Calu3 (cell line): ENCODE measurements at regions of chr2 and their contacts with region 1.

Region 1: GRCh38 chr2:84495539-84496146 is 20.7 kb upstream of the DNAH6 start:
- DNase-seq: peak; percentile 37
- H3K4me3 Mint-ChIP-seq: no peak overlapping the region
- H3K27ac Mint-ChIP-seq: no peak overlapping the region
- H3K4me1 Mint-ChIP-seq: peaks cover 13% of the 10 kb centered on the region
- H3K27me3 Mint-ChIP-seq: no peaks in the 10 kb centered on the region
- CTCF ChIP-seq: peak; percentile 65

Region 2: GRCh38 chr2:84631047-84631446 is 135.4 kb after region 1 on chr2:
- CTCF ChIA-PET with region 1: no interaction called
- intact Hi-C with region 1: loop called (anchors 1 kb)
- DNase-seq: peak; percentile 25
- H3K4me3 Mint-ChIP-seq: no peak overlapping the region
- H3K27ac Mint-ChIP-seq: no peak overlapping the region
- H3K4me1 Mint-ChIP-seq: peaks cover 10% of the 10 kb centered on the region
- H3K27me3 Mint-ChIP-seq: peaks cover 20% of the 10 kb centered on the region
- CTCF ChIP-seq: peak; percentile 36

Region 3: DNA sequence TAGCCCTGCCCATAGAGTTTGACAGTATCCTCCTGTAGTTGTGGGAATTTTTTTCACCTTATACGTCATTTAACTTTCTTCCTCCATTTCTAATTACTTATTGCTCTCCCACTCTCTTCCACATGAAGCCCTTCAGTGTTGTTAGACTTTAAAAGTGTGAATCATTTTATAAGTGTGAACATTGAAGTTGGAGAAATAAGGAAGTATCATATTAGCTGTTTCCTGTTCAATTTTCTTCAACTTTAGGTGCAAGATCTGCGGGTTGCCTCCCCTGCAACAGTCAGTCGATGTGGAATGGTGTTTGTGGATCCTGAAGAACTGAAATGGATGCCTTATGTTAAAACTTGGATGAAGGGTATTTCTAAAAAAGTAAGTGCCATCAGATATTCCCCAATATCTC is 158.8 kb after region 1 on chr2:
- CTCF ChIA-PET with region 1: no interaction called
- intact Hi-C with region 1: no loop called
- DNase-seq: no peak
- H3K4me3 Mint-ChIP-seq: no peak overlapping the region
- H3K27ac Mint-ChIP-seq: no peak overlapping the region
- H3K4me1 Mint-ChIP-seq: no peaks in the 10 kb centered on the region
- H3K27me3 Mint-ChIP-seq: peaks cover 35% of the 10 kb centered on the region
- CTCF ChIP-seq: no peak

Region 4: DNA sequence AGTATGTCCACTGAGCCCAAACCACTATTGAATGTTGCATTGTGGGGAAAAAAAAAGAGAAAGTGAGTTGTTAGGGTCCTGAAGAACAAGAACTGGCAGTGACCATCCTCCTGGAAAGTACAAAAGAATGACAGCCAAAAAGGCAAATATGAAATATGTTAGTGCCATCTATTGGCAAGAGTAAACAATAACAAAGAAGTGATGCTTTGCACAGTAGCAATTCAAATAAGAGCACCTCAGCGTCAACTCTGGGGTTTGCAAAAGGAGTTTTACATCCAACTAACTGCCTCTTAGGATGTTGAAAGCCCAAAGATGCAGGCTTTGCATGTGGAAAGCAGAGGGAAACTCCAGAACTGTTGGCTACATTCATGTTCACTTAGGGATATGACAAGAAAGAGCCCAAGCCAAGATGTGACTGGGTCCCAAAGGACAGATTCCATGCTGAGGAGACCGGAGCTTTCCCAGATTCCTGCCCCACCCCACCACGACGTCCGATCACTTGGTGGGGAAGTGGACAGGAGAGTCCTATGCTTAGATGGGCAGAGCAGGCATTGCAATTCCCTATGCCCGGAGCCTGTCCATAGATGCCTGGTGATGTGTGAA is 369.6 kb after region 1 on chr2:
- CTCF ChIA-PET with region 1: no interaction called
- intact Hi-C with region 1: loop called (anchors 2 kb)
- DNase-seq: no peak
- H3K4me3 Mint-ChIP-seq: no peak overlapping the region
- H3K27ac Mint-ChIP-seq: no peak overlapping the region
- H3K4me1 Mint-ChIP-seq: no peaks in the 10 kb centered on the region
- H3K27me3 Mint-ChIP-seq: peaks cover 20% of the 10 kb centered on the region
- CTCF ChIP-seq: peak; percentile 48

Region 5: GRCh38 chr2:84881581-84882414 is 386.2 kb after region 1 on chr2:
- CTCF ChIA-PET with region 1: no interaction called
- intact Hi-C with region 1: loop called (anchors 5 kb)
- DNase-seq: peak; percentile 82
- H3K4me3 Mint-ChIP-seq: peak overlapping the region; percentile 81
- H3K27ac Mint-ChIP-seq: no peak overlapping the region
- H3K4me1 Mint-ChIP-seq: peaks cover 23% of the 10 kb centered on the region
- H3K27me3 Mint-ChIP-seq: peaks cover 41% of the 10 kb centered on the region
- CTCF ChIP-seq: peak; percentile 83

Region 6: DNA sequence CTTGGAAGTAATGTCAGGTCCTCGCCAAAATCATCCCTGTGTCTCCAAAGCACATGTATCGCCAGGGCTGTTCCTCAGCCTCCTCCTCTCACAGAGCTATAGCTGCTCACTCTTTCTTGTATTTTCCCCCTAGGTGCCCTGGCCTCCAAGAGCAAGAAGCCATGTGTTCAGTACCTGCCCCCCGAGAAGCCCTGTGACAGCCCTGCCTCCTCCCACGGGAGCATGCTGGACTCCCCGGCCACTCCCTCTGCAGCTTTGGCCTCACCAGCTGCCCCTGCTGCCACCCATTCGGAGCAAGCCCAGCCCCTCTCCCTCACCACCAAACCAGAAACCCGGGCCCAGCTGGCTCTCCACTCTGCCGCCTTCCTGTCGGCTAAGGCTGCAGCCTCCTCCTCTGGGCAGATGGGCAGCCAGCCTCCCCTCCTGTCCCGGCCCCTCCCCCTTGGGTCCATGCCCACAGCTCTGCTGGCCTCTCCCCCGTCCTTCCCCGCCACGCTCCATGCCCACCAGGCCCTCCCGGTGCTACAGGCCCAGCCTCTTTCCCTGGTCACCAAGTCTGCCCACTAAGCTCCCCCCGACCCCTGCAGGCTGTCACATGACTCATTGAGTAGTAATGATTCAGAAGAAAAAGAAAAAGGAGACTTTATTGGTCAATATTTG is 813.4 kb after region 1 on chr2:
- CTCF ChIA-PET with region 1: no interaction called
- intact Hi-C with region 1: loop called (anchors 10 kb)
- DNase-seq: peak; percentile 18
- H3K4me3 Mint-ChIP-seq: no peak overlapping the region
- H3K27ac Mint-ChIP-seq: peak overlapping the region; percentile 0
- H3K4me1 Mint-ChIP-seq: peaks cover 31% of the 10 kb centered on the region
- H3K27me3 Mint-ChIP-seq: peaks cover 13% of the 10 kb centered on the region
- CTCF ChIP-seq: no peak